ENCODE measurements at regions of chr1 and their contacts with region 1.

Region 1: DNA sequence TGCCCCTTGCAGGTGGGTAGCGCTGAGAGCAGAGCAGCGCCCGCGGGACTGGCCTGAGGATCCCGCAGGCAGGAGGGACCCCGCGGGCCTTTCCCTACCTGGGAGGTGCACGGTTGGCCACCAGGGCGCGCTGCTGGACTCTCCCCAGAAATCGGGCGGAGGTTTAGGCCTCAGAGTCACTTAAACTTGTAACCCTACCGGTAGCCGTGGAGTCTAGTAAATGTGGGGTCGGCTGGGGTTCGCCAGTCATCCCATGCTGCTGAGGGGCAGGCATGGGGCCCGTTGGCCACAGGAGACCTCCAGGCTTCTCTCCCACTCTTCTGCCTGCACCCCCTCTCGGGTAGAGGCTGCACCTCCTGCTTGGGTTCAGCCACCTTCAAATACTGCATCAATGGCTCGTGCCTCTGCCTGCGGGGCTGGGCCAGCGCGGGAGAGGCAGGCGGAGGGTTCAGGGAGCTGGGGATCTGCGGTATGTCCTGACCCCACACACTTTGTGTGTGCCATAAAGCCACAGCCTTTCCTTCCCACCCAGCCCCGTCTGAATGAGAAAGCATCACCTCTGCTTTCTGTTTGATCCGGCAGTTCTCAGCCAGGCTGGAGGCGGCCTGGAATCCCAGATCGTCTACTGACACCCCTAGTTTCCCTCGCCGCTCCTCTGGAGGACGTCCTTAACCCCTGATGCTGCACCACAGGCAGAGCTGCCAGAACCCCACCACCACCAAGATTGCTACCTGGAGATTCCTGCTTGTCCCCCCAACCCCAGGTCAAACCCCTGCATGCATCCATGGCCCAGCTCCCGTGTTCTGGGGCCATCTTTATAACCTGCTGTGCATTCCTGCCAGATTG is 12.3 kb upstream of the GSTM4 start:
- DNase-seq: peak; percentile 88
- CTCF ChIP-seq: peak; percentile 92

Region 2: DNA sequence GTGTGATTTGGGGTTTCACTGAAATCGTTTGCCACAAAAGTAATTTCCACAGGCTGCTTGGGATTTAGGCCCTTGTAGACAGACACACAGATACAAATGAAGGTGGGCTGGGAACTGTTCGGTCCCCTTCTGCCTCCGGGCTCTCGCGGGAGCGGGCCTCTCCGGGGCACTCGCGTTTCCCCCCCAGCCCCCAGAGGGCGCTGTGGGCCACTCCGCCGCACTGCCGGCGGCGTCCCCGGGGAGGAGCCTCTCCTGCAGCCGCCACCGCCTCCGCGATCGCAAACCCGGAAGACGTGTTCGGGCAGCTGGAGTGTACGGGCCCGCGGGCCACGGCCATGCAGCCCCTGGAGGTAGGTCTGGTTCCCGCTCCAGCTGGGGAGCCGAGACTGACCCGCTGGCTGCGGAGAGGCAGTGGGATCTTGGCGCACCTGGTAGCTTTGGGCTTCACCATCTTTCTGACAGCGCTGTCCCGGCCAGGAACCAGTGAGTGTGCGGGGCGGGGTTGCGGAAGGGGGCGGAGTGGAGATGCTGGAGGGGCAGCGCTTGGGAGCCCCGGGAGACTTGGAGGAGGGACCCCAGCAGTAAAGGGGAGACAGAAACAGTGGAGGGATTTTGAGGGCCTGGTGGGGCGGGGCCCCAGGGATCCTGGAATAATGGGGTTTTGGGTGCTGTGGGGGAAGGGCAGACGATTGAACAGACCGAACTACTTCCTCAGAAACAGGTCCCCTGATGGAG is 149.6 kb before region 1 on chr1 and contains the start of gene CYB561D1:
- CTCF ChIA-PET with region 1: interaction called, 10 read pairs
- POLR2A ChIA-PET with region 1: no interaction called
- DNase-seq: peak; percentile 94
- CTCF ChIP-seq: peak; percentile 74

Region 3: DNA sequence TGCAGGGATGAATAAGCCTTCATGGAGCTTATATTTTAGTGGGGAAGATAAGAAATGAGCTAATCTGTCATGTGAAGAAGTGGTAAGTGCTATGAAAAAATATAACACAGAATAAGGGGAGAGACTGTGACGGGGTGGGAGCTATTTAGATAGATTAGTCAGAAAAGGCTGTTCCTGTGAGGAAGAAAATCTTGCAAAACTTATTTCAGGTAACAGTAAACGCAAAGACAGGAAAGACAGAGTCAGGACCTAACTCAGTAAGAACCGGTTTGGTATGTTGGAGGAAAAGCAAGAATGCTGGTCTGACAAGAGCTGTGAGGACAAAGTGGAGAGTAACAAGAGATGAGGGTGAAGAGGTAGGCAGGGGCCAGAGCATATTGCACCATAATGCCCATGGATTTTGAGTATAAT is 73.2 kb before region 1 on chr1:
- CTCF ChIA-PET with region 1: interaction called, 11 read pairs
- POLR2A ChIA-PET with region 1: no interaction called
- DNase-seq: no peak
- CTCF ChIP-seq: no peak

Region 4: DNA sequence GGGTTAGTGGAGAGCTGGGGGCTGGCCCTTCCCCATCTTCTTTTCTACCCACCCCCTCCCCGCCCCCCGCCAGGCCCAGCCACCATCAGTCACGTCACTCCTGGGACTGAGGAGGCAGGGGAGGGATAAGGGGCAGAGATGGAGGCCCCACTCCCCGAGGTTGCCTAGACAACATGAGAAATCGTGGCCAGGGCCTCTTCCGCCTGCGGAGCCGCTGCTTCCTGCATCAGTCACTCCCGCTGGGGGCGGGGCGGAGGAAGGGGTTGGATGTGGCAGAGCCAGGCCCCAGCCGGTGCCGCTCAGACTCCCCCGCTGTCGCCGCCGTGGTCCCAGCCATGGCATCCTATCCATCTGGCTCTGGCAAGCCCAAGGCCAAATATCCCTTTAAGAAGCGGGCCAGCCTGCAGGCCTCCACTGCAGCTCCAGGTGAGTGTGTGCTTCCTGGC is 22.7 kb before region 1 on chr1:
- CTCF ChIA-PET with region 1: interaction called, 135 read pairs
- POLR2A ChIA-PET with region 1: interaction called, 4 read pairs
- DNase-seq: peak; percentile 95
- CTCF ChIP-seq: no peak

Region 5: GRCh38 chr1:109667452-109668122 is 24.0 kb after region 1 on chr1 and contains the start of gene GSTM2:
- CTCF ChIA-PET with region 1: interaction called, 108 read pairs
- POLR2A ChIA-PET with region 1: no interaction called
- DNase-seq: peak; percentile 87
- CTCF ChIP-seq: no peak

Region 6: DNA sequence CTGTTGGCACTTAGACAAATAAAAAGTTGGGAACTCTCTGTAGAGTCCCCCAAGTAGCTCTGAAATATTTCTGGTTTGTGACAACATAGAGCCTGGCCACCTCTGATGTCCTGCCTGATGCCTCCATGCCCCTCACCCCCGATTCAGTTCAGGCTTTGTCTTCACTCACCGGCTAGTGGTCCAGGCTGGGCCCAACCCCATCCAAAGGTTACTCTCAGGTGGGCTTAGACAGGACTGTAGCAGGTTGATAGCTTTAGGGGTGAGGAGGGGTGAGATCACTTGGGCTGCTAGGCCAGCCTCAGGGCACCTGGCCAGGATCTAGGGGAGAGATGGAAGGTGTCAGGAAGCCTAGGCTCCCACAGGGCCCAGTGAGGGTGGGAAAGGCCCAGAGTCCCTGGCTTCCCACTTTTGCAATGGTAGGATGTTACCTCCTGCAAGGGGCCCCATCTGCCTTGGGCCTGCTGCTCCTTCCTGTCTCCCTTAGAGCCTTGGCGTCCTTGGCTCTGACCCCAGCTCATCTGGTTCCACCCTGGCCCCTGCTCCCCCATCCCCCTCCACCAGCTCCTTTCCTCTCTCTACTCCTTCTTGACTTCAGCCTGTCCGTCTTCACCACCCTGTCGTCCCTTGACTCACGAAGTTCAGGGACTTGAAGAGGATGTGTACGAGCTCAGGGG is 113.4 kb after region 1 on chr1:
- CTCF ChIA-PET with region 1: interaction called, 11 read pairs
- POLR2A ChIA-PET with region 1: no interaction called
- DNase-seq: no peak
- CTCF ChIP-seq: no peak

Measured in GM10248 (cell line).